ENCODE measurements at regions of chr7 and their contacts with region 1.

Region 1: DNA sequence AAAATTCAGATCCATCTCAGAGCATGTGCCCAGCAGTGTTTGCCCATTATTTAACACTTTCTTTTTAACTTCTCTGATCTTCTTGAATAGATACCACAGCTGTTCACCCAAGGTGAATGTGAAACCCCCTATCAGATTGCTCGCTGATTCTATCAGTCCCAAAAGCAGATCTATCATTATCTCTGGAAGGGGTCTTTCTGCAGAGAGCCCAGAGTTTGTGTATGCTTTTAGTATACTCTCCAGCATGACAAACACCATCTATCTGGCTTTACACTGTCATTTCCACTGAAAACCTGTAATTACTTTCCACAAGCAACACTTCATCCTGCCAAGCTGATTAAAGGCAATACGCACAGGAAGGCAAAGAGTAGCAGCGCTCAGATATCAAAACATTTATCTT is 168.2 kb downstream of the CACNA2D1 start:
- DNase-seq: no peak
- ATAC-seq: no peak
- H3K4me3 ChIP-seq: no peak overlapping the region
- H3K27ac ChIP-seq: no peak overlapping the region
- H3K4me1 ChIP-seq: no peaks in the 10 kb centered on the region
- H3K27me3 ChIP-seq: peaks cover 0 to 4% (median 0%) of the 10 kb centered on the region in 4 donors
- CTCF ChIP-seq: no peak

Region 2: GRCh38 chr7:82319674-82320118 is 44.4 kb after region 1 on chr7:
- intact Hi-C with region 1: loop called in 1 of 3 experiments (anchors 10 kb)
- DNase-seq: peak; percentile 9 to 67 (median 24)
- ATAC-seq: peak in 3 of 4 donors; percentile 38 to 85 (median 77)
- H3K4me3 ChIP-seq: no peak overlapping the region
- H3K27ac ChIP-seq: no peak overlapping the region
- H3K4me1 ChIP-seq: no peaks in the 10 kb centered on the region
- H3K27me3 ChIP-seq: no peaks in the 10 kb centered on the region
- CTCF ChIP-seq: no peak

Region 3: DNA sequence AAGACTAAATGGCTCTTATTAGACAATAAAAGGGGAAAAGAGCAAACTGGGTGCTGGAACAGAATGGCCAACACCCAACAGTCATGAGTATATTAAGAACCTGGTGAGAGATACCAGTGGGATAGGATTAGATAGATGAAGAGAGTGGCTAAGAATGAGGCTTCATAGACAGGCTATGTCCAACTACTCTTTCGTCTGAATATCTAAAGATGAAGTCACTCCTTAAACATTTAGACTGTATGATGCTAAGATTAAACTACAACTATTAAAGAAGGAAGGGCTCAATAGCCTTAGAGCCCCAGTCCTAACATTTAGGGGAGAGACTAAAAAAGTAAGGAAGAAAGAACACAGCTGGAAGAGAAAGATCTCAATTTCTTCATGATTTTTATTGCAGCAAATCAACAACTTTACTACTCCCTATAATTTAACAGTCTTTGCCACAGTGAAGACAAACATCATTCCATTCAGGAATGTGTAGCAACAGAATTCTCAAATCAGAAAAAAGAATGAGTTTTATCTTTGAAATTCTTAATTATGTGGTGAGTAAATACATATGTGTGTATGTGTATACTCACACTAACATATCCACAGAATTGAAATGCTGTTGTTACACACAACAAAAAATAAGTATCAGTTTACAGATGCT is 122.7 kb after region 1 on chr7:
- intact Hi-C with region 1: no loop called
- DNase-seq: no peak
- ATAC-seq: no peak
- H3K4me3 ChIP-seq: no peak overlapping the region
- H3K27ac ChIP-seq: no peak overlapping the region
- H3K4me1 ChIP-seq: no peaks in the 10 kb centered on the region
- H3K27me3 ChIP-seq: no peaks in the 10 kb centered on the region
- CTCF ChIP-seq: no peak